Naive thymus-derived CD4-positive, alpha-beta T cell (primary cell): ENCODE measurements at regions of chr5 and their contacts with region 1.

Region 1: GRCh38 chr5:54480296-54480695 is 24.8 kb downstream of the HSPB3 start:
- DNase-seq: no peak
- ATAC-seq: peak; percentile 27
- H3K4me3 ChIP-seq: no peak overlapping the region
- H3K4me3 Mint-ChIP-seq: no peak overlapping the region
- H3K27ac ChIP-seq: no peak overlapping the region
- H3K27ac Mint-ChIP-seq: no peak overlapping the region
- H3K4me1 ChIP-seq: no peaks in the 10 kb centered on the region
- H3K4me1 Mint-ChIP-seq: peaks cover 0 to 3% (median 0%) of the 10 kb centered on the region in 7 donors
- H3K27me3 ChIP-seq: no peaks in the 10 kb centered on the region
- H3K27me3 Mint-ChIP-seq: peaks cover 5 to 19% (median 14%) of the 10 kb centered on the region in 5 donors

Region 2: DNA sequence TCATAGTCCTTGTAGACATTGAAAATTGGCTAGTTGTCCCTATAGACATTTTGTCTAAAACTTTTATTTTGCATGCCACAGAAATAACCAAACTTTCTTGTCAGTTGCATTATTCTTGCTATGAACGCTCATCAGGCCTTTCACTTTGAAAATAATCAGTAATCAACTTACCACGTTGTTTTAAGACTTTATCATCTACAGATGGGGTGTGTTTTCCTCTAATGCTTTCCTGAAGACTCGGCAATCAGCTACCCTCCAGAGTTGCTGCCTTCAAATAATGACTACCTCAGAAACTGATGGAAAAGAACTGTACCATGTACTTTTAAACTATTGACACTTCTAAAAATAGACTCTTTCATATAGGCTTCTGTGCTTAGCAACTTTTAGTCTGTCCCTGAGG is 58.3 kb before region 1 on chr5:
- CTCF ChIA-PET with region 1: no interaction called
- POLR2A ChIA-PET with region 1: no interaction called
- intact Hi-C with region 1: loop called in 1 of 2 experiments (anchors 5 kb)
- DNase-seq: no peak
- ATAC-seq: no peak
- H3K4me3 ChIP-seq: no peak overlapping the region
- H3K4me3 Mint-ChIP-seq: no peak overlapping the region
- H3K27ac ChIP-seq: no peak overlapping the region
- H3K27ac Mint-ChIP-seq: no peak overlapping the region
- H3K4me1 ChIP-seq: no peaks in the 10 kb centered on the region
- H3K4me1 Mint-ChIP-seq: no peaks in the 10 kb centered on the region
- H3K27me3 ChIP-seq: no peaks in the 10 kb centered on the region
- H3K27me3 Mint-ChIP-seq: peaks cover 4 to 32% (median 16%) of the 10 kb centered on the region in 5 donors